Sigmoid colon (tissue), 7 donors: ENCODE measurements at regions of chr3 and their contacts with region 1.

Region 1: GRCh38 chr3:33372218-33373081 is 67.8 kb downstream of the UBP1 start:
- DNase-seq: no peak
- H3K4me3 ChIP-seq: no peak overlapping the region
- H3K27ac ChIP-seq: no peak overlapping the region
- H3K4me1 ChIP-seq: peaks cover 0 to 9% (median 4%) of the 10 kb centered on the region in 4 donors
- H3K27me3 ChIP-seq: no peaks in the 10 kb centered on the region
- CTCF ChIP-seq: peak; percentile 71 to 91 (median 84)
- EP300 ChIP-seq: no peak
- POLR2A ChIP-seq: no peak

Region 2: GRCh38 chr3:33113772-33114621 is 258.5 kb before region 1 on chr3 and contains the start of gene CRTAP:
- intact Hi-C with region 1: no loop called
- DNase-seq: peak; percentile 99
- H3K4me3 ChIP-seq: peak within 1 kb of the TSS; percentile 60 to 92 (median 75)
- H3K27ac ChIP-seq: peak within 1 kb of the TSS; percentile 95 to 99 (median 99)
- H3K4me1 ChIP-seq: peaks cover 0 to 34% (median 20%) of the 10 kb centered on the region in 4 donors
- H3K27me3 ChIP-seq: no peaks in the 10 kb centered on the region
- CTCF ChIP-seq: no peak
- EP300 ChIP-seq: no peak
- POLR2A ChIP-seq: peak; percentile 26 to 29
- total RNA-seq, gene CRTAP: 245 to 509 (median 309) TPM

Region 3: GRCh38 chr3:33131331-33132018 is 241.0 kb before region 1 on chr3:
- intact Hi-C with region 1: loop called (anchors 2 kb)
- DNase-seq: no peak
- H3K4me3 ChIP-seq: no peak overlapping the region
- H3K27ac ChIP-seq: no peak overlapping the region
- H3K4me1 ChIP-seq: no peaks in the 10 kb centered on the region
- H3K27me3 ChIP-seq: no peaks in the 10 kb centered on the region
- CTCF ChIP-seq: peak; percentile 45 to 81 (median 68)
- EP300 ChIP-seq: no peak
- POLR2A ChIP-seq: no peak